ENCODE measurements at regions of chr11 and their contacts with region 1.

Region 1: GRCh38 chr11:119134389-119134978 is 13.1 kb downstream of the HINFP start:
- DNase-seq: peak in 2 of 14 experiments; percentile 39 to 46
- ATAC-seq: no peak
- H3K4me3 ChIP-seq: no peak overlapping the region
- H3K4me3 Mint-ChIP-seq: no peak overlapping the region
- H3K27ac ChIP-seq: no peak overlapping the region
- H3K27ac Mint-ChIP-seq: no peak overlapping the region
- H3K4me1 ChIP-seq: no peaks in the 10 kb centered on the region
- H3K4me1 Mint-ChIP-seq: no peaks in the 10 kb centered on the region
- H3K27me3 ChIP-seq: no peaks in the 10 kb centered on the region
- H3K27me3 Mint-ChIP-seq: peaks cover 8% of the 10 kb centered on the region
- CTCF ChIP-seq: peak; percentile 18

Region 2: GRCh38 chr11:119115484-119116234 is 18.8 kb before region 1 on chr11:
- CTCF ChIA-PET with region 1: interaction called, 3 read pairs
- POLR2A ChIA-PET with region 1: interaction called, 4 read pairs
- intact Hi-C with region 1: loop called in 1 of 2 experiments (anchors 1 kb)
- DNase-seq: peak in 6 of 14 experiments; percentile 15 to 73 (median 56)
- ATAC-seq: peak; percentile 94
- H3K4me3 ChIP-seq: peak overlapping the region; percentile 48
- H3K4me3 Mint-ChIP-seq: peak overlapping the region; percentile 71
- H3K27ac ChIP-seq: peak overlapping the region; percentile 59 to 80
- H3K27ac Mint-ChIP-seq: peak overlapping the region; percentile 86
- H3K4me1 ChIP-seq: peaks cover 42% of the 10 kb centered on the region
- H3K4me1 Mint-ChIP-seq: peaks cover 30% of the 10 kb centered on the region
- H3K27me3 ChIP-seq: no peaks in the 10 kb centered on the region
- H3K27me3 Mint-ChIP-seq: no peaks in the 10 kb centered on the region
- CTCF ChIP-seq: no peak

Measured in CD4-positive, alpha-beta T cell (primary cell).